Dorsolateral prefrontal cortex (tissue), 120 donors: ENCODE measurements at regions of chr13 and their contacts with region 1.

Region 1: GRCh38 chr13:78137404-78138142 is 218.9 kb upstream of the EDNRB start:
- DNase-seq: peak in 1 of 10 donors; percentile 20
- H3K4me3 ChIP-seq: peak overlapping the region in 13 of 59 donors; percentile 2 to 35 (median 22)
- H3K27ac ChIP-seq: no peak overlapping the region
- H3K27me3 ChIP-seq: no peaks in the 10 kb centered on the region
- CTCF ChIP-seq: peak; percentile 51 to 86 (median 73)

Region 2: DNA sequence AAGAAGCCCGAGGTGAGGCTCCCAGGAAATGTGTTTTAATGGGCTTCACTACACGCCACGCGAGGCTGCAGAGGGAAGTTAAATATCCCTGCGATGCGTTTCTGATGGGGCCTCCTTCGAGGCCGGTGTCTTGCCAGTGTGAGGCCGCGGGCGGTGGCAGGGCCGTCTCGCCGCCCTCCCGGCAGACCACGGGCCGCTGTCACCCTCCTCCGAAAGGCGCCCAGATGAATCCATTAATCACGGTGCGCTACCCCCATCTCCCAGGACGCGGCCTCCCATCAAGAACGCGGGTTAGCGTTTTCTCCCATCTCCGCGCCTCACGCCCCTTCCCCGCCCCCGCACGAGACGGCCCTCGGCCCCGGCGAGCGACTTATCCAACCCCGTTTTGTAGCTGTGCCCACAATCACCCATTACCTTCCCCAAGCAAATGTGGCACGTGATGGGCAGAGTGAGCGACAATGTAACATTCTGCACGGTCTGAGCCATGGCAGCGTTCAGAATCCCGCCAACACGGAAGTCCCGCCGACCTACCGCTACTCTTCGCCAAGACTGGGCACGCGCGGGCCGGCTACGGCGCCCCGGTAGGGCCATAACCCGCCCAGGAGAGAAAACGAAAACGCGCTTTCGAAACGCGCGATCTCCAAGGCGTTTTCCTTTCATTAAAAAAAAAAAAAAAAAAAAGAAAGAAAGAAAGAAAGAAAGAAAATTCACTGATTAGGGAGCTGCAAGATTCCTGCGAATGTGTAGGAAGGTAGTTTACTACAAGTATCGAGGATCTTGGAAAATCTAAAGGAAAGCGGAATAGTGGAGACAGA is 521.3 kb after region 1 on chr13 and contains the start of gene OBI1:
- intact Hi-C with region 1: loop called in 1 of 2 experiments (anchors 10 kb)
- DNase-seq: peak; percentile 86 to 96 (median 92)
- H3K4me3 ChIP-seq: peak within 1 kb of the TSS; percentile 68 to 99 (median 90)
- H3K27ac ChIP-seq: peak within 1 kb of the TSS in 44 of 59 donors; percentile 31 to 86 (median 64)
- H3K27me3 ChIP-seq: no peaks in the 10 kb centered on the region
- CTCF ChIP-seq: peak in 7 of 56 donors; percentile 7 to 34 (median 11)
- total RNA-seq, gene OBI1: 6.2 to 20.5 (median 14.8) TPM

Region 3: GRCh38 chr13:78978381-78978998 is 840.9 kb after region 1 on chr13:
- intact Hi-C with region 1: loop called (anchors 2 kb)
- DNase-seq: peak in 3 of 10 donors; percentile 13 to 45 (median 26)
- H3K4me3 ChIP-seq: no peak overlapping the region
- H3K27ac ChIP-seq: no peak overlapping the region
- H3K27me3 ChIP-seq: peaks cover 0 to 7% (median 0%) of the 10 kb centered on the region in 45 donors
- CTCF ChIP-seq: peak; percentile 45 to 90 (median 79)

Region 4: DNA sequence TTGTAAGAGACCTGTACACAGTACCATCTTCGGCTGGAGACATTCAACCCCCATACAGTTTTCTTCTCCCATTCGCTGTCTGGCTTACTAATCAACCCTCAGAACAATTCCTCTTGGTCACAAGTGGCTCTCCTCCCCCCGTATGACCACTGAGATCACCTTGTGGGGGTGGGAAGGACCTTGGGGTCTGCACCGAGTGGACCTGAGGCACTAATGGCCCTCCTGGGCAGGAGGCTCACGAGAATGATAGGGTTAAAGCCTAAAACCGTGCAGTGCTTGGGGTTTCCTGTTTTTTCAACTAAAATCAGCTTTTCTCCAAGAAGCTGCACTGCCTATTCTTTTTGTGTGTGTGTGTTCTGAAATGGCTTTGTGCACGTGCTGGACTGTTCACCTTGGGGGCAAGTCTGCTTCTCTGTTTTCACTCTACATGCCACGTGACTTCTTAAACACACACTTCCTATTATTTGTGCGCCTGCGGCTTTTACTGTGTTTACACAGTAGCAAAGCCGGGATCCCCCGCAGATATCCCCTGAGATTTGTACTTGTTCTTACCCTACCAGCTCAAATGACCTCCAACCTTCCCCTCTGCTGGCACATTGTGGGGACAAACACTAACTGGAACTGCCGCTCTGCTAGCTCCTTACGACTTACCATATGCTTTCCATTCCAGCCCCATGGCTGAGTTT is 1256.1 kb after region 1 on chr13:
- intact Hi-C with region 1: loop called in 1 of 2 experiments (anchors 10 kb)
- DNase-seq: no peak
- H3K4me3 ChIP-seq: peak overlapping the region in 1 of 59 donors; percentile 30
- H3K27ac ChIP-seq: peak overlapping the region in 5 of 59 donors; percentile 3 to 46 (median 21)
- H3K27me3 ChIP-seq: no peaks in the 10 kb centered on the region
- CTCF ChIP-seq: no peak